Ascending aorta (tissue), 2 donors: ENCODE measurements at regions of chr12 and their contacts with region 1.

Region 1: GRCh38 chr12:100200463-100201181 is at the start of gene ACTR6:
- DNase-seq: peak; percentile 88 to 97
- H3K4me3 ChIP-seq: peak within 1 kb of the TSS; percentile 57 to 93
- H3K27ac ChIP-seq: peak within 1 kb of the TSS; percentile 79 to 92
- H3K4me1 ChIP-seq: peaks cover 7 to 15% of the 10 kb centered on the region in 2 donors
- H3K27me3 ChIP-seq: no peaks in the 10 kb centered on the region
- CTCF ChIP-seq: no peak
- total RNA-seq, gene ACTR6: 7.9 TPM

Region 2: GRCh38 chr12:99810718-99811593 is 389.7 kb before region 1 on chr12:
- intact Hi-C with region 1: loop called (anchors 5 kb)
- DNase-seq: no peak
- H3K4me3 ChIP-seq: no peak overlapping the region
- H3K27ac ChIP-seq: no peak overlapping the region
- H3K4me1 ChIP-seq: no peaks in the 10 kb centered on the region
- H3K27me3 ChIP-seq: no peaks in the 10 kb centered on the region
- CTCF ChIP-seq: peak in 2 of 3 experiments; percentile 30 to 51

Region 3: DNA sequence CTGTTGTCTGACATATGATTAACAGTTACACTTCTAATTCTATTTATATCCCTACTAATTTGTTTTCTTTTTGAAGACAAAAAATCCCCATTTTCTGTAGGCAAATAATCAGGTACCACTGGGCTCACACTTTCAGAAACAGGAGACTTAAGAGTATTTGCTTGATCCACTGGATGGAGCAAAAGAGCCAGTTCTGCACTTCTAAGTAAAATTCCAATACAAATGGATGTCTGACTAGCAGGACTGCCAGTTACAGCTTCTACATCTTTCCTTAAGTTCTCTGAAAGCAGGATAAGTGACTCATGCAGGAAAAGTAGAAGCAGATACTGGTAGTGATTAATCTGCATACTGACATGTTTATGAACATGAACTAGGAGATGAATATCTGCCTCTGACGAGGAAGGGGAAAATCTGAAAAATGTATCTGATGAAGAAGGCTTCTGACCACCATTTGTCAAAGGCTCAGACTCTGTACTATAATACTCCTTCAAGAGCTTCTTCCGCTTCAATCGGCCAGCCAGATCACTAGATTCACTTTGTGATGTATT is 142.1 kb before region 1 on chr12:
- intact Hi-C with region 1: loop called (anchors 2 kb)
- DNase-seq: no peak
- H3K4me3 ChIP-seq: no peak overlapping the region
- H3K27ac ChIP-seq: peak overlapping the region in 1 of 2 donors; percentile 20
- H3K4me1 ChIP-seq: no peaks in the 10 kb centered on the region
- H3K27me3 ChIP-seq: no peaks in the 10 kb centered on the region
- CTCF ChIP-seq: peak in 1 of 3 experiments; percentile 39

Region 4: GRCh38 chr12:100142851-100143559 is 57.6 kb before region 1 on chr12 and contains the start of gene BLTP3B:
- intact Hi-C with region 1: loop called (anchors 1 kb)
- DNase-seq: peak; percentile 67 to 96
- H3K4me3 ChIP-seq: peak within 1 kb of the TSS; percentile 86 to 93
- H3K27ac ChIP-seq: peak within 1 kb of the TSS; percentile 99 to 100
- H3K4me1 ChIP-seq: peaks cover 0 to 24% of the 10 kb centered on the region in 2 donors
- H3K27me3 ChIP-seq: no peaks in the 10 kb centered on the region
- CTCF ChIP-seq: no peak
- total RNA-seq, gene BLTP3B: 18.8 TPM

Region 5: GRCh38 chr12:100234598-100235304 is 34.1 kb after region 1 on chr12:
- intact Hi-C with region 1: loop called (anchors 1 kb)
- DNase-seq: no peak
- H3K4me3 ChIP-seq: no peak overlapping the region
- H3K27ac ChIP-seq: peak overlapping the region in 1 of 2 donors; percentile 30
- H3K4me1 ChIP-seq: no peaks in the 10 kb centered on the region
- H3K27me3 ChIP-seq: no peaks in the 10 kb centered on the region
- CTCF ChIP-seq: peak; percentile 48 to 79 (median 66)

Region 6: DNA sequence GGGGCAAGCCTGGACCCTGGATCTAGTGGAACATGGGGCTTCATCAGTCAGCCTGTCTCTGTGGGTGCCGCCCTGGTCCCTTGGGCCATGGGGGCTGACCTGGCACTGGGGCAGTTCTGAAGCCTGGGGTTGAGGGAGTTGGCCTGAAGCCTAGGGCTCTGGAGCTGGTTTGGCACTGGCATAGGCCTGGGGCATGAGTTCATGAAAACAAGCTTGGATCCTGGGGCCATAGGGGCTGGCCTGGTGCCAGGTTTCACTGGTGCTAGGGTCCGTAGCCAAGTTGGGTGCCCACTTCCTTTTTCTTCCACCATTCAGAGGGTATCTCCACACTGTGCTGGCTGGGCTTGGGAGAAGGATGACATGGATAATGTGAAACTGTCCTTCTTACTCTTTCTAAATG is 567.3 kb after region 1 on chr12:
- intact Hi-C with region 1: no loop called
- DNase-seq: no peak
- H3K4me3 ChIP-seq: no peak overlapping the region
- H3K27ac ChIP-seq: no peak overlapping the region
- H3K4me1 ChIP-seq: no peaks in the 10 kb centered on the region
- H3K27me3 ChIP-seq: no peaks in the 10 kb centered on the region
- CTCF ChIP-seq: no peak